Activated T-helper 2 cell treated with anti-CD3 and anti-CD28 coated beads, Interferon-gamma antibody, Interleukin-2, Interleukin-4, amounts not matched to agents 10 μg/mL and 5 μg/mL and 100 μg/mL, durations not matched to agents 14 hours and 24 hours and 36 hours (primary cell): ENCODE measurements at regions of chr20 and their contacts with region 1.

Region 1: GRCh38 chr20:59598625-59599310 is 5.6 kb upstream of the PHACTR3 start:
- DNase-seq: no peak
- H3K4me3 Mint-ChIP-seq: no peak overlapping the region
- H3K27ac Mint-ChIP-seq: no peak overlapping the region
- H3K4me1 Mint-ChIP-seq: no peaks in the 10 kb centered on the region
- H3K27me3 Mint-ChIP-seq: peaks cover 38% of the 10 kb centered on the region

Region 2: DNA sequence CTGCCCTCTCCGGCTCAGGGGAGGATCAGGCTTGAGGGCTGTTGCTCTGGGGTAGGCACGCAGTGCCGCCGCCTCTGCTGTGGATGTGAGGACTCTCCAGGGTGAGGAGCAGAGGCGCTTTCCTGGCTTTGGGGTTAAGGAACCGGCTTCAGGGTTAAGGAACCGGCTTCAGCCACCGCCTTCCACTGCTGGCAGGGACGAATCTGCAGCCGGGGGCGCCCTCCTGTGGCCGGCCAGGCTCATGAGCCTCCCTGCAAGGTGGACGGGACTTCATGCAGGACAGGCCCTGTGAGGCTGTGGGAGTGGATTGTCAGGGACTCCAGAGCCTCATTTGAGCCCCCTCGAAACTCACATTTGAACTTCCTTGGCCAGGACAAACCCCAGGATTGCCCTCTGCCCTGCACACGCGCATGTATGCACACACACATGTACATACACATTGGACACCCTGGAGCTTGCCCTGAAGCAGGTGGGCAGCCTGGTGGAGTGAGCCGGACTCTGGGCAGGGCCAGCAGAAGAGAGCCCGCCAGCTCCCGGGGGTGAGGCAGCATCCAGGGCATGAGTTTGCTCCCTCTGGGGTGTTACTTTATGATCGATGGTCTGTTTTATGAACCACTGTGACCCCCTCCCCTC is 152.4 kb after region 1 on chr20:
- intact Hi-C with region 1: loop called (anchors 2 kb)
- DNase-seq: peak; percentile 14
- H3K4me3 Mint-ChIP-seq: no peak overlapping the region
- H3K27ac Mint-ChIP-seq: no peak overlapping the region
- H3K4me1 Mint-ChIP-seq: peaks cover 2% of the 10 kb centered on the region
- H3K27me3 Mint-ChIP-seq: no peaks in the 10 kb centered on the region

Region 3: GRCh38 chr20:59850018-59850641 is 251.4 kb after region 1 on chr20:
- intact Hi-C with region 1: loop called (anchors 10 kb)
- DNase-seq: no peak
- H3K4me3 Mint-ChIP-seq: no peak overlapping the region
- H3K27ac Mint-ChIP-seq: no peak overlapping the region
- H3K4me1 Mint-ChIP-seq: no peaks in the 10 kb centered on the region
- H3K27me3 Mint-ChIP-seq: peaks cover 7% of the 10 kb centered on the region